HCT116 (cell line): ENCODE measurements at regions of chr4 and their contacts with region 1.

Region 1: GRCh38 chr4:163554870-163555465 is 60.5 kb downstream of the TMA16 start:
- DNase-seq: no peak
- ATAC-seq: no peak
- H3K4me3 ChIP-seq: no peak overlapping the region
- H3K27ac ChIP-seq: no peak overlapping the region
- H3K4me1 ChIP-seq: no peaks in the 10 kb centered on the region
- H3K27me3 ChIP-seq: no peaks in the 10 kb centered on the region
- CTCF ChIP-seq: peak; percentile 46 to 87 (median 76)
- POLR2A ChIP-seq: no peak
- RAD21 ChIP-seq: peak; percentile 71

Region 2: DNA sequence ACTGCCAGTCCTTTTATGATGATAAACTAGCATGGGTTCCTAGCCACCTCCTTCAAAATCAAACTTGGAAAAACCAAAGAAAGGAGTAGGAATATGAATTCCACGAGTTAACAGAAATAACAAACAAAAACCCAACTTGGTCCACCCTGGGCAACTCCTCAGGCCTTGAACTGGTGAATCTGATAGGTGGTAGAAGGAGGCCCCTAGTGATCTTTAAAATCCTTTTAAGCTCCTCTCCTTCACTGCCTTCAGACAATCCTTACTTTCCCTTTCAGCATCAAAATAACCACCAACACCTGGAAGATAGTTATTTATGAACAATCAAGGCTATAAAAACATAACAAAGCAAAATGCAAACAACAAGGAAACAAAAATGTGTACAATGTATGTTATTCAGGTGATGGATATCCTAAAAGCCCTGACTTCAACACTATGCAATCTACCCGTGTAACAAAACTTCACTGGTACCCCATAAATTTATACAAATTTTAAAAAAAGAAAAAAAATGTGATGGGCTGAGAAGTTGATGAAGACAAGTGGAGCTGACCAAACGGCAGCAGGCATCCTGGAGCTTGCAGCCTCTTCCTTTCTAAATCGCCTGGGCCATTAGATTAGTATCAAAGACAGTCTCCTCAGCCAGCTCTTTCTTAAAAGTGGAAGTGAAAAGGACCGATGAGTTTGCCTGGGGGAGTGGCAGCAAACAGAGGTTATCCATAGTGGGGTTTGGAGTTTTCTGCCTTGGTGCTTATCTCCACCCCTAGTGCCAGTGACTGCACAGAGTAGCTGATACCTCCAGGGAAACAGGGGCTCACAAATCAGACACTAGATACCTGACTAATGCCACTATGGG is 119.1 kb after region 1 on chr4:
- CTCF ChIA-PET with region 1: interaction called, 6 read pairs
- POLR2A ChIA-PET with region 1: no interaction called
- RAD21 ChIA-PET with region 1: no interaction called
- intact Hi-C with region 1: loop called (anchors 5 kb)
- DNase-seq: no peak
- ATAC-seq: no peak
- H3K4me3 ChIP-seq: no peak overlapping the region
- H3K27ac ChIP-seq: no peak overlapping the region
- H3K4me1 ChIP-seq: no peaks in the 10 kb centered on the region
- H3K27me3 ChIP-seq: no peaks in the 10 kb centered on the region
- CTCF ChIP-seq: no peak
- POLR2A ChIP-seq: no peak
- RAD21 ChIP-seq: no peak

Region 3: DNA sequence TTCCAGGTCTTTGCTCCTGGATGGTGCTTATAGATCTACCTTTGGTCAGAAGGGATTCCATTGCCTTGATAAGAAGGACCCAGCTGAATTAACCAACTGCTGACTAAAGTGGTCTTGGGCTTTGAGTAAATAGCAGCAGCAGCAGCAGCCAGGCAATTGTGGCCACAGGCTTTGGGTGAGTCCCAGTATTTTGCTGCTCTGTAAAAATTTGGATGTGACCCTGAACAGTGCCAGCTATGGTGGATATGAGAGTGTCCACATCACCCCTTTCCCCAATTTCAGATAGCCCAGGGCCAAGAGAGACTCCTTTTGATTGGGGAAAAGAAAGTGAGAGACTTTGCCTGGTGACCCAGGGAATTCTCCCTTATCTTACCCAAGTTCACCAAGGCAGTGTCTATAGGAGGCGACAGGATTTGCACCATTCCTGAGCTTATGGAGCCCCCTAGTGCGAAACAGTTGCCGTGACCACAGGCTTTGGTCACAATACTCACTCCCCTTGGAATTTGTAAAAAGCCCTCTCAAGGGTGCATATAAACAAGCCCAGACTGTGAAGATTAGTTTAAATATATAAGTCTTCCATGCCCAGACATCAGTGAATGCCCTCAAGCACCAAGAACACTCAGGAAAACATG is 457.5 kb after region 1 on chr4:
- CTCF ChIA-PET with region 1: interaction called, 14 read pairs
- POLR2A ChIA-PET with region 1: no interaction called
- RAD21 ChIA-PET with region 1: interaction called, 3 to 4 read pairs
- intact Hi-C with region 1: loop called (anchors 1 kb)
- DNase-seq: peak; percentile 29
- ATAC-seq: peak; percentile 99
- H3K4me3 ChIP-seq: no peak overlapping the region
- H3K27ac ChIP-seq: no peak overlapping the region
- H3K4me1 ChIP-seq: no peaks in the 10 kb centered on the region
- H3K27me3 ChIP-seq: no peaks in the 10 kb centered on the region
- CTCF ChIP-seq: peak; percentile 69 to 82 (median 72)
- POLR2A ChIP-seq: no peak
- RAD21 ChIP-seq: peak; percentile 89

Region 4: GRCh38 chr4:164748375-164748774 is 1193.4 kb after region 1 on chr4:
- CTCF ChIA-PET with region 1: interaction called, 7 read pairs
- POLR2A ChIA-PET with region 1: no interaction called
- RAD21 ChIA-PET with region 1: no interaction called
- intact Hi-C with region 1: loop called (anchors 5 kb)
- DNase-seq: peak; percentile 13
- ATAC-seq: no peak; the same call in 1 of the 2 replicates
- H3K4me3 ChIP-seq: no peak overlapping the region
- H3K27ac ChIP-seq: no peak overlapping the region
- H3K4me1 ChIP-seq: no peaks in the 10 kb centered on the region
- H3K27me3 ChIP-seq: no peaks in the 10 kb centered on the region
- CTCF ChIP-seq: peak in 2 of 3 experiments; percentile 38 to 46; a peak in 4 of 6 replicates
- POLR2A ChIP-seq: no peak
- RAD21 ChIP-seq: peak; percentile 56